HEK293 (cell line): ENCODE measurements at regions of chr11 and their contacts with region 1.

Region 1: DNA sequence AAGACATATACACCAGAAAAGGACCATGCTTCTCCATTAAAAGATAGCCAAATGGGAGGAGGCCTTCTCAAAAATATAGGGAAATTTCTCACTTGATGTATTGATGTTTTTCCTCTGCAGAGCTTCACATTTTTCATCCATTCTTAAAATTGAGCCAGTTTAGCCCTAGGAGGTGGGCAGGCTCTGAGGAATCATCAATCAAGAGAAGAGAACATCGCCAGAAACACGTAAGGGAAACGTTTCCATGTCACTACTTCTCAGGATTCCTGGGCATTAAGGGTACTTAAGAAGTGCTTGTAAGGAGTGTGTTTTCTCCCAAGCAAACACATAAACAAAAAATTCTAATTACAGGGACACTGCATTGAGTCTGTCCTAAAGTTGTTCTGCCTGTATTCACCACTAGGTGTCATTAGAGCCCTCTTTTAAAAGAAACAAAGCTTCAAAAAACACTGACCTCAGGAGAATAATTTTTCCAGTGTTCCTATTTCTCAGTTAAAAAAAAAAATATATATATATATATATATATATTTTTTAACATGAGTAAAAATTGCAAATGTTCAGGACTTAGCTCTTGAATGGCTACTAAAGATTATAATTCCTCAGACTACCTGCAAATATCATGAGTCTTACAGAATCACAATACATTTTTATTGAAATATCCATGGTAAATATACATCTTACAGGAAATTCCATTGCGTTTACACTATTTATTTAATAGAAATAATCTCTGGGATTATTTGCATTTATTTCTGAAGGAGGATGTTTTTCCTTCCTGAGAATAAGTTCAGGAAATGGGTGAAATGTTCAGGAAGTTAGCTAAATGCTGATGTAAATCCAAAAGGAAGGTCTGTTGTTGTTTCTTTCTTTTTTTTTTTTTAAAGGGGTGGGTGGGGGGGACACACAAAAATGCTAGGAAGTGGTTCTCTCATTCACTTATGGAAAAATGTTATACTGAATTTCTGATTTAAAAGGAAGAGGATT is 16.0 kb downstream of the FZD4 start:
- H3K4me3 ChIP-seq: no peak overlapping the region
- H3K27ac ChIP-seq: no peak overlapping the region
- H3K4me1 ChIP-seq: peaks cover 3% of the 10 kb centered on the region; the same call in 1 of the 2 replicates
- CTCF ChIP-seq: no peak

Region 2: GRCh38 chr11:86877503-86877902 is 61.7 kb before region 1 on chr11:
- CTCF ChIA-PET with region 1: no interaction called
- POLR2A ChIA-PET with region 1: no interaction called
- H3K4me3 ChIP-seq: no peak overlapping the region
- H3K27ac ChIP-seq: no peak overlapping the region
- H3K4me1 ChIP-seq: no peaks in the 10 kb centered on the region
- CTCF ChIP-seq: no peak

Region 3: GRCh38 chr11:86926975-86927374 is 12.2 kb before region 1 on chr11:
- CTCF ChIA-PET with region 1: interaction called, 19 read pairs
- POLR2A ChIA-PET with region 1: interaction called, 3 read pairs
- H3K4me3 ChIP-seq: no peak overlapping the region
- H3K27ac ChIP-seq: no peak overlapping the region
- H3K4me1 ChIP-seq: peaks cover 7% of the 10 kb centered on the region; the same call in 1 of the 2 replicates
- CTCF ChIP-seq: no peak

Region 4: DNA sequence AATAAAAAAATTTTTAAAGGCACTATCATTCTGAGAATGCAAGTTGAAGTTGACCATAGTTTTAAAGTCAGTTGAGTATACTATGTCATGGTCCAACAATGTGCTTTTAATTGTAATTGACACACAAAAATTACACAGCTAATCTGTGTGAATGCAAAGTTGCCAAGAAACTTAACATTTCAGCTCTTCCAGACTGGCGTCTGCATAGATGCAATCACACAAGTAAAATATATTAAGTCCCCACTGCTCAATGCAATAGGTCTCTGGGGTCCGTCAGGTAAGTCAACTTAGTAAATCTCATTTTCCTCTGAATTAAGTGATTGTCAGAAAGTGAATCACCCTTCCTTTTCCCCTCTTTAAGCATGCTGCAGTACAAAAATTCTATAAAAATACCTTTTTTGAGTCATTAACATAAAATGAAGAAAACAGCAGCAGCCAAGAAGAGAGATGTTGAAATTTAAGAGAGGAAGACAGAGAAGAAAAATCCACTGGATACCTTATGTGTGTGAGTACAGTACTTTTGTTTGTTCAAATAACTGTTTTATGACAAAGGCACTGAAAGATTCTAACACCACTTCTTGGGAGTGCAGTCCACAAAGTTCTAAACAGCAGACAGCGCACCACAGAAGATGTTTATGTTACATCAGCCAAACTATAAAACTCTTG is 10.9 kb after region 1 on chr11:
- CTCF ChIA-PET with region 1: interaction called, 35 read pairs
- POLR2A ChIA-PET with region 1: interaction called, 12 read pairs
- H3K4me3 ChIP-seq: no peak overlapping the region
- H3K27ac ChIP-seq: no peak overlapping the region
- H3K4me1 ChIP-seq: no peaks in the 10 kb centered on the region; the same call in 1 of the 2 replicates
- CTCF ChIP-seq: no peak

Region 5: DNA sequence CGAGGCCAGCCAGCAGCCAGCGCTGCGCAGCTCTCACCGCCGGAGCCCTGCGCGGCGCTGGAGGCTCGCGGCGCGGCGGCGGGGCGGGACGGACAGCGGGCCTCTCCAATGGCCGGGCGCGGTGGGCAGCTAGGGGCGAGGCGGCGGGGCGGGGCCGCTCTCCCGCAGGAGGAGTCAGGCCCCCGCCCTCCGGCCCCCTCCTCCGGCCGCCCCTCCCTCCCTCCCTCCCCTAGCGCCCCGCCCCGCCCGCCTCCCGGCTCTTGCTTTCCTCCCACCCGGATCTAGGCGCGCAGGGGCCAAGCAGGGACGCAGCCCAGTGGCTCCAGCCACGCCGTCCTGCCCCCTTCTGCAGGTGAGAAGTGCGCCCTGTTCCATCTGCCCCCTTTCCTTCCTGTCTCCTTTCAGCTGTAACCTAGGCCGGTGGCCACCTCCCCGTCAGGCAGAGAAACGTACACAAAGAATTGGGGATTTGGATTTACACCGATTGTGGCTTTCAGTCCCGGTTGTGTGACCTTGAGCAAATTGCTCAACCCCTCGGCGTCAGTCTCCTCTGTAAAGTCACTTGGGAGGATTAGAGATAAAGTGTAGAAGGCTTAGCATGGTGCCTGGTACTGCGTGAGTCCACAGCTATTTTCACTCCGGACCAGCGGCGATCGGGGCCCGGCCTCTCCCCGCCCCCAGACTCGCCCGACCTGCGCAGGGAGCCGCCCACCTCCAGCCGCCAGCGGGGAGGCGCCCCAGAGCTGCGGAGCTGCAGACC is 16.4 kb after region 1 on chr11 and contains the start of gene FZD4:
- CTCF ChIA-PET with region 1: interaction called, 35 read pairs
- POLR2A ChIA-PET with region 1: interaction called, 12 read pairs
- H3K4me3 ChIP-seq: peak within 1 kb of the TSS; percentile 75
- H3K27ac ChIP-seq: peak within 1 kb of the TSS; percentile 74
- H3K4me1 ChIP-seq: no peaks in the 10 kb centered on the region
- CTCF ChIP-seq: peak; percentile 52

Region 6: DNA sequence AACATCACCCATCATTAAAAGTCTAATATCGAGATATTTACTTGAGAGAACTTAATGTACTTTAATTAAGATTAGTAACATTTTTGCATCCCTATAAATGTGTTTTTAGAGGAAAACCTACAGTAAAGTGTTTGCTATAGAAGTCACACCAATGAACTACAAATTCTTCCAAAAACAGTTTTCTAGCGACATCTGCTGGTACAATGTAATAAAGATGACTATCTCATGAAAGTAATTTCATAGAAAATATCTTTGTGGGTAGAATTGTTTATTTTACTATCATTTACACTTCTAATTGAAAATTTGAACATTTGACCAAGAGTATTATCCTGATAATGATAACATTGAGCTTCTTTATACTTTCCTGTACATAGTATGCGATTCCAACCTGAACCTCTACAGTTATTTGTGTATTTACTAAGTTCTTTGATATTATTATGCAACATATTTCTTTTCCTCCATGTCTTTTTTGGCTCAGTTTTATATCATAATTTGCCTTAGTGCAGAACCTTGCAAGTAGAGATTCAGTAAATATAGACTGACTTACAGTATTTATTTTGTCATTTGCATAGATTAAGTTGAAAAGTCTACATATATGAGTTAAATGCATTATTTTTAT is 351.2 kb after region 1 on chr11:
- CTCF ChIA-PET with region 1: interaction called, 27 read pairs
- POLR2A ChIA-PET with region 1: no interaction called
- H3K4me3 ChIP-seq: no peak overlapping the region
- H3K27ac ChIP-seq: no peak overlapping the region
- H3K4me1 ChIP-seq: no peaks in the 10 kb centered on the region
- CTCF ChIP-seq: no peak

Region 7: DNA sequence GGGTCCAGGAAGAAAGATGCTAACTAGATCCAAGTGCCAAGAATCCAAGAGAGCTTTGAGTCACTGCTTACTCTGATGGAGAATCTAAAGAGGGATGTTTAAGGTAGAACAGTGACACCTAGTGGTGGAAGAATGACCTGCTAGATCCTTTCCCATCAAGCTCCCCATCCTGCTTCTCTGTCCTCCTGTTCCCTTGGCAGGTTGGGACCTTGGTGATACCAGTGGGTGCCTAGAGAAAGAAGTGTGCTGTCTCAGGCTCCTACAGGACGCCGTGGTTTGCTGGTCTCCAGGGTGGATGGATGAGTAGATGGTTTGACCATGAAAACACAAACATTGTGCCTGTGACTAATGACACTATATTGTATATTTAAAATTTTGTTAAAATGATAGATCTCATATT is 482.2 kb after region 1 on chr11:
- CTCF ChIA-PET with region 1: interaction called, 21 read pairs
- POLR2A ChIA-PET with region 1: no interaction called
- H3K4me3 ChIP-seq: no peak overlapping the region
- H3K27ac ChIP-seq: no peak overlapping the region
- H3K4me1 ChIP-seq: no peaks in the 10 kb centered on the region
- CTCF ChIP-seq: no peak